AG04450 (cell line): ENCODE measurements at regions of chr2 and their contacts with region 1.

Region 1: GRCh38 chr2:231557571-231558237 is 27.5 kb upstream of the NMUR1 start:
- DNase-seq: peak; percentile 68
- H3K4me3 ChIP-seq: no peak overlapping the region
- H3K27ac ChIP-seq: no peak overlapping the region
- H3K27me3 ChIP-seq: no peaks in the 10 kb centered on the region
- CTCF ChIP-seq: peak; percentile 82

Region 2: DNA sequence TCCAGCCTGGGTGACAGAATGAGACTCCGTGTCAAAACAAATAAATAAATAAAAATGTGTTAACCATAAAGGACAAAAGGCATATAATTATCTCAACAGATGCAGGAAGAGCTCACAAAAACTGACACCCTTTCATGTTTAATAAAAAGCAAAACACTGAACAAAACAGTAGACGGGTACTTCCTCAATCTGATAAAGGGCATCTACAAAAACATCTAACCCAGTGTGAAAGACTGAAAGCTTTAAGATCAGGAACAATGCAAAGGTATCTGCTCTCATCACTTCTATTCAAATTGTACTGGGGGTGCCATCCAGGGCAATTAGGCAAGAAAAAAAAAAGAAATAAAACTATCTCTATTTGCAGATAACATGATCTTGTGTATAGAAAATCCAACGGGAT is 81.7 kb before region 1 on chr2:
- CTCF ChIA-PET with region 1: interaction called, 87 read pairs
- POLR2A ChIA-PET with region 1: no interaction called
- DNase-seq: no peak
- H3K4me3 ChIP-seq: no peak overlapping the region
- H3K27ac ChIP-seq: no peak overlapping the region
- H3K27me3 ChIP-seq: peaks cover 9% of the 10 kb centered on the region
- CTCF ChIP-seq: no peak

Region 3: DNA sequence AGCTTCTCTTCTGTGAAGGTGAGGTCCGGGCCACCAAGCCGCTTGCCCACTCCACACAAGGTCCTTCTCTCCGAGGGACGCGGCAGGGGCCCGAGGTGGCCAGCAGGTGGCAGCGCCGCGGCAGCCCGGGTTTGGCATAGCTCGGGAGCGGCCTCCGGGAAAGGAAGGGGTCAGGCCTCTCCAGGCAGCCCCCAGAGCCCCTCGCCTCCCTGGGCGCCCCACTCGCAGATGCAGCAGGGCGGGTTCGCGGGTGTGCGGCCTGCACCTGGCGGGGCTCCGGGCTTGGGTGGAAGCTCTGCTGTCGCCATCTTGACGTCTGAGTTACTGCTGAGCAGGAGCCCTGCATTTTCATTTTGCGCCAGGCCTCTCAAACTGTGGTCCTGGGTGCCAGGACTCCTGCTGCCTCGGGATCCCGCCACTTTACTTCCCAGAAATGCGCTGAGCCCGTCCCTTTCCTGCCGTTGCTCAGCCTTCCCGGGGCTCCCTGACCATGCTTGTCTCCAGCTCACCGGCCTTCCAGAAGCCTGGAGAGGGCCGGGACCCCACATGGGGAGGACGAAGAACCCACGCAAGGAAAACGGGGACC is 74.8 kb before region 1 on chr2:
- CTCF ChIA-PET with region 1: interaction called, 87 read pairs
- POLR2A ChIA-PET with region 1: no interaction called
- DNase-seq: no peak
- H3K4me3 ChIP-seq: peak overlapping the region; percentile 17; the same call in 1 of the 2 replicates
- H3K27ac ChIP-seq: no peak overlapping the region
- H3K27me3 ChIP-seq: peaks cover 6% of the 10 kb centered on the region
- CTCF ChIP-seq: peak; percentile 89

Region 4: DNA sequence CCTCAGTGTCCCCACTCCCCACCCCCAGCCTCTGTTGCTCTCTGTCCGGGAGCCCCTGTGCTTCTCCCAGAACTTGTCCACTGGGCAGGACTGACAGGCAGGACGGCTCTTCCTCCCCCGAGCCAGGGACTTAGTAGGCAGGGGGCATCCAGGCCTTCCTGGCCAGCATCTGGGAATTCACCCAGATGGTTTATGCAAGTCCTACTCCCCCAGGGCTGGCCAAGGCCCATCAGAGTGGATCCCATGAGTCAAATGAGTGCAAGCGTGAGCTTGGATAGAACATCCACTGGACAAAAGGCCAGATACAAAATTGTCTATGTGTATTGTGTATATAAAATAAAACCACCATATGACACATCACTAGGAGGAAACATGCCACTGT is 34.9 kb before region 1 on chr2:
- CTCF ChIA-PET with region 1: interaction called, 33 read pairs
- POLR2A ChIA-PET with region 1: interaction called, 3 read pairs
- DNase-seq: peak; percentile 51
- H3K4me3 ChIP-seq: no peak overlapping the region
- H3K27ac ChIP-seq: peak overlapping the region; percentile 61
- H3K27me3 ChIP-seq: no peaks in the 10 kb centered on the region
- CTCF ChIP-seq: no peak

Region 5: DNA sequence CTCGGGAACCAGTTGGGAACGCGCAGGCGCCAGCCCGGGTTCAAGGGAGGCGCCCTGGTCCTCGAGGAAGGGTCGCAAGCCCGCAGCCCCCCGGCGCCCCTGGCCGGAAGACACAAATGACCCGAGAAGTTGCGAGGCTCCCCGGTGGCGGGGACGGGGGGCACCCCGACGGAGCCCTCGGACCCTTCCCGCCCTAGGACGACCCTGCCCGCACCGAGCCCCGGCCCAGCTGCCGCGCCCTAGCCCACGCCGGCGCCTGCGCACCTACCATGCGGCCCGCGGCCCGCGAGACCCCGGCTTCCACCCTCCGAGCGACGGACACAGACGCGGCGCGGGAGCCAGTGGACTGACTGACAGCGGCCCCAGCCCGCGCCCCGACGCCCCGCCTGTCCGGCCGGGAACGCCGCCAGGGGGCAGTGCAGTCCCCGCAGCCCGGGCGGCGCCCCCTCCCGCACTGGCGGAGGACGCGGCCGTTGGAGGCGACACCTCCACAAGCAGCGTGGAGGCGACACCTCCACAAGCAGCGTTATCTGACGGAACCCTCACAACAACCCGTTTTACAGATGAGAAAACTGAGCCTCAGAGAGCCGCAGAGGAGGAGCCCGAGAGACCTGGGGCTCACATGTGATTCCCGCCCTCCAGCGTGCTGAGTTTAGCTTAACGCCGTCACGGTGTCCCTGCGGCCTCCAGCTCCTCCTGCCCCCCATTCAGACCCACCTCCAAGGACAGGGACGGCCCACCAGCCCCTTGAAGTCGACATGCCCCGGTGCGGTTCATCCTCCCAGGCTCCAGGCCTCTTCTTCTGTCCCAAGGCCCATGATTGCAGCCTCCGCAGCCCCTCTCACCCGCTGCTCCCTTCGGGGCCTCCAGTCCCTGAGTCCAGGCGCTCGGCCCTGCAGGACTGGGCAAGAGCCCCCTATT is 27.4 kb before region 1 on chr2 and contains the start of gene NMUR1:
- CTCF ChIA-PET with region 1: interaction called, 12 read pairs
- POLR2A ChIA-PET with region 1: no interaction called
- DNase-seq: no peak
- H3K4me3 ChIP-seq: peak within 1 kb of the TSS; percentile 13; the same call in 1 of the 2 replicates
- H3K27ac ChIP-seq: no peak within 1 kb of the TSS
- H3K27me3 ChIP-seq: peaks cover 37% of the 10 kb centered on the region
- CTCF ChIP-seq: peak; percentile 53
- polyA plus RNA-seq, gene NMUR1: not detected in 2 replicates

Region 6: DNA sequence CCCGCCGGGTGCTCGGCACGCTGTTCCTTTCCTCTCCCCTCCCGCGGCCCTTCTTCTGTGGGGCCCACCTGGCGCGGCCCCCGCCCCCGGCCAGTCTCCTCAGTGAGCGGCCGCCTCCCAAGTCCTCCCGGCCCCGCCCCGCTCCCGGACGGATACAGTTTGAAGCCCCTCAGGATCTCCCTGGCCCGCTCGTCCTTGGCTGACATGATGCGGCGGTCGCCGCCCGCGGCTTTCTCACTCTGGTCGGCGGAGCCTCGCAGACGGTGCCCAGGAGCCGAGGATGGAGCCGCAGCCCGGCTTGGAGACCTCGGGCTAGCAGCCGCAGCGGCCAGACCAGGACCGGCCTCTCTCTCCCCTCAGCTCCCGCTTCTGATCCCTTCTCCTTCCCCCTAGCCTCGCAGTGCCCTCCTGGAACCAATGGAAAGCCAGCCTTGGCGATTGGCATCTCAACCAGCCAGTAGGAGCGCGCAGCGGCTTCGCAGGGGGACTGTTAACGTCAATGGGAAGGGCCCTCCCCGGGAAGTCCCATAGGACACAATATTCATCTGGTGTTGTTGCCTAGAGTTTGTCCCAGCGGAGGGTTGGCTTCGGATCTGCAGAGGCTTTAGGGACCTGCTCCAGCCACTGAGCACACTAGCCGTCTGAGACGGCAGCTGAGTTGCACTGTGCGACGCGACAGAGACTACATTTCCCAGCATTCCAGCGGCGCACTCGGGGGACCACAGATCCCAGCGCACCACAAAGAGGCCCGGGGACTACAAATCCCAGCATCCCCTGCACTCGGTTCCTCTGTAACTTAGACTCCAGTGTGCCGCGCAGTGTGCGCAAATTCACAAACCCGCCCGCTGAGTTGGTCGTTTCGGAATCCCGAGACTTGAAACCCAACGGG is 223.4 kb after region 1 on chr2 and contains the start of gene PDE6D:
- CTCF ChIA-PET with region 1: no interaction called
- POLR2A ChIA-PET with region 1: no interaction called
- DNase-seq: peak; percentile 96
- H3K4me3 ChIP-seq: peak within 1 kb of the TSS; percentile 96
- H3K27ac ChIP-seq: peak within 1 kb of the TSS; percentile 68
- H3K27me3 ChIP-seq: no peaks in the 10 kb centered on the region
- CTCF ChIP-seq: no peak
- polyA plus RNA-seq, gene PDE6D: 29.1 and 35.7 TPM in 2 replicates